ENCODE measurements at regions of chr6 and their contacts with region 1.

Region 1: DNA sequence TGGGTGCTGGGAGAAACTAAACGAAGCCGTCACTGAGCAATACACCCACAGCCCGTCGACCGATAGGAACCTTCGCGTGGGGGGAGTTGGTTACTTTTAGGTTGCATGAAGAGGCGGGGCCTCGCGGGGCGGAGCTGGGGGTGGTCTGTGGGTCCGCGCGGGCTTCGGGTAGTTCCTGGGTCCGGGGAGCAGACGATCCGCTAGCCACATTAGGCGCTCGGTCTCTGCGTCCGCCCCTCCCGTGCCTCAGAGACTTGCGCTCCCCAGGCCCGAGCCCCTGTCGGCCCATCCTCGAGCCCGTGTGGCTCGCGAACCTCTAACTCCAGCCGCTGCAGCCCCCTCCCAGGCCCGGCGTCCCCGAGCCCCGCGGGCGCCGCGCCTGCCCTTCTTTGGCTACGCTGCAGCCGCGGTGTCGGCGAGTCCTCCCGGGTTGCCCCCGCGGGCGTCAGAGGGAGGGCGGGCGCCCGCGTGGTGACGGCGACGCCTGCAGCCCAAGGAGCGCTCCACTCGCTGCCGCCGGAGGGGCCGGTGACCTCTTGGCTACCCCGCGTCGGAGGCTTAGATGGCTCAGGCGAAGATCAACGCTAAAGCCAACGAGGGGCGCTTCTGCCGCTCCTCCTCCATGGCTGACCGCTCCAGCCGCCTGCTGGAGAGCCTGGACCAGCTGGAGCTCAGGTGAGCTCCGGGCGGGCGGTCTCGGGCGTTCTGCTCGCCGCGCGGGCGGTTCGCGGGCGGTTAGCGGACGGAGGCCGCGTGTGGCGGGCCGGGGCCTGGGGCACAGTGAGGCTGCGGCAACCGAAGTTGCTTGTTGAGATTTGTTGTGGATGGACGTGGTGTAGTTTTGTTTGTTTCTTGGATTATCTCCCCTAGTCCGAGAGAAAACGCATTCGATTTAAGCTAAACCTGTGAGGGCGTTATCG is at the start of gene BAG2:
- DNase-seq: peak; percentile 78 to 96
- H3K4me3 ChIP-seq: peak within 1 kb of the TSS; percentile 72 to 79
- H3K27ac ChIP-seq: peak within 1 kb of the TSS; percentile 91 to 95
- H3K4me1 ChIP-seq: peaks cover 0 to 28% of the 10 kb centered on the region in 2 donors
- H3K27me3 ChIP-seq: no peaks in the 10 kb centered on the region
- CTCF ChIP-seq: peak; percentile 9 to 26 (median 22)
- total RNA-seq, gene BAG2: 7.7 TPM

Region 2: GRCh38 chr6:56955171-56956045 is 217.0 kb before region 1 on chr6:
- intact Hi-C with region 1: loop called (anchors 10 kb)
- DNase-seq: peak; percentile 36 to 89
- H3K4me3 ChIP-seq: peak overlapping the region; percentile 61 to 75
- H3K27ac ChIP-seq: peak overlapping the region; percentile 46 to 52
- H3K4me1 ChIP-seq: peaks cover 0 to 3% of the 10 kb centered on the region in 2 donors
- H3K27me3 ChIP-seq: no peaks in the 10 kb centered on the region
- CTCF ChIP-seq: peak; percentile 61 to 80 (median 68)

Region 3: DNA sequence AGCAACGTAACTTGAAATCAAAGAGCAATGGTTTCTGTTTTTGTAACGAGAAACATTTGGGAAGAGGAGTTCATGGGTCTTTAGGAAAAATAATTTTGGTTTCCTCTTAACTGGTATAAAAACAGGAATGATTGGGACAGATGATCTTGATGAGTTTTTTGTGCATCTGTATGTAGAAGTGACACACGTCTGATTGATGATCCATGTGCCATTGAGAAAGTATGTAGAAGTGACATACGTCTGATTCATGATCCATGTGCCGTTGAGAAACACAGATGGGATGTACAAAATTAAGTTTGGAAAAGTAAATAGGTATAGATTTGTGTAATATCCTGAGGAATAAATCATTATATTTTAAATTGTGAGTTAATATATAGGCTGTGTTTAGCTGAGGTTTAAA is 123.8 kb before region 1 on chr6:
- intact Hi-C with region 1: loop called (anchors 5 kb)
- DNase-seq: no peak
- H3K4me3 ChIP-seq: no peak overlapping the region
- H3K27ac ChIP-seq: no peak overlapping the region
- H3K4me1 ChIP-seq: peaks cover 0 to 12% of the 10 kb centered on the region in 2 donors
- H3K27me3 ChIP-seq: no peaks in the 10 kb centered on the region
- CTCF ChIP-seq: no peak

Region 4: DNA sequence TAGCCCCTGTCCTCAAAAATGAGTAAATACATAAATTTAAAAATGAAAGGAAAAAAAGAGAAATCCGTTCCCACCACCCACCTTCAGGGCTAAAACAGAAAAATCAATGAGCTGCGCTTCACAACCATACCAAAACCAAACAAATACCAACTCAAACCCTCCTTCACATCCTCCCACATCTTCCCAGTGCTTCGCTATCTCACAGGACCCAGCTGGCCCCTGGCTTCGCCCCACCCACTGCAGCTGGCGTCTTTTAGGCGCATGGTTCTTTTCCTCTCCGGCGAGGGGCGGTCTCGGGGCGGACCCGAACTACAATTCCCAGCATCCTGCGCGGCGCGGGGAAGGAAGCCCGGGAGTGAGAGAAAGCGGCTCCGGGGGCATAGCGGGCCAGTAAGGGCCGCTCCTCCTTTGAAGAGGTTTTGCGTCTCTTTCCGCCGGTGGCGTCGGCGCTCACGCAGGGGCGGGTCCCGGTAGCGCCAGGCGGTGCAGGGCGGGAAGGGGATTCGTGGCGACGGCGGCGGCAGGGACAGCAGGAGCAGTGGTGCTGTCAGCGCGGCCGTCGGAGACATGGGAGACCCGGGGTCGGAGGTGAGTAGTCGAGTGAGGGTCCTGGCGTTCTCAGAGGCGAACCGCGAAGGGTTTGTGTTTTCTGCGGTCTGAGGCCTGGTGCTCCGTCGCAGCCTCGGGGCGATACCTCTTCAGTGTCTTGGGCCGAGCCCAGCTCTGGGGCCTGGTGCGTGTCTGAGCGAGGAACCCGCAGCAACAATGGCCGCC is 82.5 kb before region 1 on chr6 and contains the start of gene ZNF451:
- intact Hi-C with region 1: loop called (anchors 5 kb)
- DNase-seq: peak; percentile 93 to 99
- H3K4me3 ChIP-seq: peak within 1 kb of the TSS; percentile 68 to 84
- H3K27ac ChIP-seq: peak within 1 kb of the TSS; percentile 79 to 88
- H3K4me1 ChIP-seq: peaks cover 3 to 24% of the 10 kb centered on the region in 2 donors
- H3K27me3 ChIP-seq: no peaks in the 10 kb centered on the region
- CTCF ChIP-seq: no peak
- total RNA-seq, gene ZNF451: 21.5 TPM

Region 5: GRCh38 chr6:57221936-57222742 is 49.7 kb after region 1 on chr6 and contains the start of gene RAB23:
- intact Hi-C with region 1: loop called (anchors 1 kb)
- DNase-seq: peak; percentile 16 to 89
- H3K4me3 ChIP-seq: peak within 1 kb of the TSS; percentile 72 to 88
- H3K27ac ChIP-seq: peak within 1 kb of the TSS; percentile 93 to 96
- H3K4me1 ChIP-seq: peaks cover 0 to 6% of the 10 kb centered on the region in 2 donors
- H3K27me3 ChIP-seq: no peaks in the 10 kb centered on the region
- CTCF ChIP-seq: no peak
- total RNA-seq, gene RAB23: 19.9 TPM

Region 6: GRCh38 chr6:57267586-57268293 is 95.3 kb after region 1 on chr6:
- intact Hi-C with region 1: loop called (anchors 5 kb)
- DNase-seq: peak in 1 of 2 donors; percentile 90
- H3K4me3 ChIP-seq: no peak overlapping the region
- H3K27ac ChIP-seq: peak overlapping the region; percentile 48 to 60
- H3K4me1 ChIP-seq: peaks cover 11 to 30% of the 10 kb centered on the region in 2 donors
- H3K27me3 ChIP-seq: no peaks in the 10 kb centered on the region
- CTCF ChIP-seq: peak; percentile 35 to 56 (median 52)

Measured in ascending aorta (tissue), 2 donors.